GM10248 (cell line): ENCODE measurements at regions of chr2 and their contacts with region 1.

Region 1: GRCh38 chr2:156675896-156676295 is 239.7 kb downstream of the GPD2 start:
- DNase-seq: no peak
- CTCF ChIP-seq: no peak

Region 2: DNA sequence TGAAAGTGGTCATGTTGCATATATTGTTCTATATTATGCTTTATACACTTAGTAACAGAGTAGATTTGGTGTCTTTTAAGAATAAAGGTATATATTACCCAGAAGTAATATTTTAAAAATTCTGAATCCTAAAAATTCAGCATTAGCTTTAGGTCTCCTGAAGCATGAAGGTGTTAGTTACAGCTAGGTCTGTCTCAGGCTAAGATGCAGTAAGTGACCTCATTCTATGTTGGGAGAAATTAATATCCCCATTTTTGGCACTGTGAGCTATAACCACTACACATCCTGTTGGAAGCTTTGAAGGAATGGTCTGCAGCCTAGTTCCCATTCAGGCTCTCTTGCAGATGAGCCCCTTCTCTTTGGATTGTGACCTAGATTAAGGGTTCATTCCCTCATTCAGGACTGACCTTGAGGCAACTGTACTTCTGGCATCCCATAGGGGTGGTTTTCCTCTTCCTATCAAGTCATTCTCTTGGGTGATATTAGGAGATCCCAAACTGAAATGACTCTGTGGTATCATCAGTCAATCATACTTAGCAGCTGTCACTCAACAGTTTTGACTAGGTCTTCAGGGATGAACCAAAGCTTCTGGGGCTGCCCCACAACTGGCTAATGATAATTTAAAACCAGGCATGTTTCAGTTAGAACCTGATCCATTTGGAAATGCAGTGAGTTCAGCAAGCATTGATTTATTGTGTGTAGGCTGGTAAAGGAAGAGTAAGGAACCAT is 122.0 kb before region 1 on chr2:
- CTCF ChIA-PET with region 1: no interaction called
- POLR2A ChIA-PET with region 1: no interaction called
- DNase-seq: no peak
- CTCF ChIP-seq: no peak

Region 3: DNA sequence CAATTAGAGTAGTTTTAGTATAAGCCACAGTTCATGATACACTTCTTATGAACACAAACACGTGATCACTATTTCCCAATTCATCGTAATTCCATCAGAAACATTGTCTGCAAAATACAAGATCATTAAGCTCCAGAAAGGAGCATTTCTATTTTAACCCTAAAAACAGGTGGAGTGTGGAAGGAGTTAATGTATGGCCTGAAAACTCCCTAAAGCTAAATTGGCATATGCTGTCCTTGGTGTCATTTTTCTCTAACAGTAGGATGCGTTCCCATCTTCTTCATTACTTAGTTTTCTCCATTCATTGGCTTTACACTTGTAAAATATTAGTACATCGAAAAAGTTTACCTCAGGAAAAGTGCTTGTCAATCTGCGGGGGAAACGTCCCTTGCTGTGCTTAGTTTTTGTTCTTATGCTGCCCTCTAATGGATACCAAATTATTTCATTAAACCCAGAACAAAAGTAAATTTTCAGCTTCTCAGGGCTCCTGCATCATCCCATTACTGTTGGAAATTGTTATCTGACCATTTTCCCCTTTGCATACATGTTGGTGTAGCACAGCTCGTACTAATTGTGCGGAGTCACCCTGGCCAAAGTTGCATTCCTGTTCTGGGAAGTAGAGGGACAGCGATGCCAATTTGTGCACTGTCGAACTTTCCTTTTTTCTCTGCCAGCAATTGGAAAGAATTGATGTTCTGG is 86.4 kb before region 1 on chr2:
- CTCF ChIA-PET with region 1: no interaction called
- POLR2A ChIA-PET with region 1: no interaction called
- DNase-seq: peak; percentile 15
- CTCF ChIP-seq: peak; percentile 45

Region 4: GRCh38 chr2:156663757-156664409 is 12.0 kb before region 1 on chr2:
- CTCF ChIA-PET with region 1: interaction called, 10 read pairs
- POLR2A ChIA-PET with region 1: no interaction called
- DNase-seq: peak; percentile 24
- CTCF ChIP-seq: no peak

Region 5: DNA sequence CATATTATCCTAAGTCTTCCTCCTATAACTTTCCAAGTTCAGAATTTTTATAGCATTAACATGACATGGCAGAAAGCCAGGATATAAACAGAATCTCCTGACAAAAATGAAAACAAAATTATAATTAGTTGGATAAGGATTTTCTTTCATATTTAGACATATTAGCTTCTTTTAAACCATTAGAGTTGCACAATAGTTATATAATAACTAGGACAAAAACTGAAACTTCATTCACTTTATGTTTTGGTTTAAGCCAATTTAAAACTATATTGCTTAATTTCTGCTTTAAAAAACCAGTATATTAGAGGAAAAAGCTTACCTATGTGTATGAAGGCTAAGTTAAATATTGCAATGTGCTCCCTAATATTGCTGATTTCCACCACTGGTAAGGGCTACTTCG is 15.1 kb after region 1 on chr2:
- CTCF ChIA-PET with region 1: no interaction called
- POLR2A ChIA-PET with region 1: no interaction called
- DNase-seq: no peak
- CTCF ChIP-seq: no peak

Region 6: DNA sequence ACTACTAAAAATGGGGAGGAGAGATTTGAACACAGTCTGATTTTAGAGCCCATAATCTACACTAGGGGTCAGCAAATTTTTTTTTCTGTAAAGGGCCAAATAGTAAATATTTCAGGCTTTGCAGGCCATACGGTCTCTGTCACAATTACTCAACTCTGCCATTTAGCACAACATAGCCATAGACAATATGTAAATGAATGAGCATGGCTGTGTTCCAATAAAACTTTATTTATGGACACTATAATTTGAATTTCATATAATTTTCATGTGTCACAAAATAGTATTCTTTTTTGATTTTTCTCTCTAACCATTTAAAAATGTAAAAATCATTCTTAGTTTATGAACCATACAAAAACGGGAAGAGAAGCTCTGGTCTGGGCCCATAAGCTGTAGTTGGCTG is 69.7 kb after region 1 on chr2:
- CTCF ChIA-PET with region 1: no interaction called
- POLR2A ChIA-PET with region 1: no interaction called
- DNase-seq: no peak
- CTCF ChIP-seq: no peak